CD14-positive monocyte (primary cell): ENCODE measurements at regions of chr20 and their contacts with region 1.

Region 1: DNA sequence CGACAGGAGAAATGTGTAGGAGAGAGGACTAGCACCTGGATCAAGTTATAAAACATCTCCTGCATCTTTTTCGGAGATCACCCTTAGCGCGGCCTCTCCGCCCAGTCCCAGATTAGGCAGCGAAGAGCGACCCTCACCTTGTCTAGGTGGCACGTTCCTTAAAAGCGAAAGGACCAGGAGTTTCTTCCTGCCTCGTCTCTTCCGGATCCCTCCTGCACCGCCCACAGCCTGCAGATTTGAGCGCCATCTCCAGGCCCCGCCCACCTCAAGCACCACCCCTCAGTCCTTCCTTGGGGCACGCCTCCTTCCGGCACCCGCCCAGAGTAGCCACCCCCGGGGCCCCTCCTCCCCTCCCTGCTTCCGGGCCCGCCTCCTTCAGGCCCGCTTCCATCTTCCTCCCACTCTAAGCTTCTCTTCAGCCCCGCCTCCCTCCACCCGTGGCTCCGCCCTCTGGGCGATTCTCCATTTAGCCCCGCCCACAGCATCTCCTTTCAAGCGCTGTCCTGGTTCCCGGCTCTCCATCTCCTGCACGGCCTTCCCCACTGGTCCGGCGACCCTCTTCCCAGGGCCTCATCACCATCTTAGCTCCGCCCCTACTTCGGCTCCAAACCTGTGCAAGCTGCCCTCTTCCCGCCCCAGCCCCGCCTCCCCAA is 662 bp upstream of the RALY start:
- DNase-seq: peak; percentile 96 to 98 (median 98)
- H3K4me3 ChIP-seq: peak overlapping the region; percentile 72 to 99 (median 98)
- H3K4me3 Mint-ChIP-seq: peak overlapping the region; percentile 92 to 99
- H3K27ac ChIP-seq: peak overlapping the region; percentile 82 to 94
- H3K27ac Mint-ChIP-seq: peak overlapping the region; percentile 94 to 99 (median 98)
- H3K4me1 ChIP-seq: peaks cover 34 to 51% of the 10 kb centered on the region in 2 donors
- H3K4me1 Mint-ChIP-seq: peaks cover 52% of the 10 kb centered on the region
- H3K27me3 ChIP-seq: no peaks in the 10 kb centered on the region
- H3K27me3 Mint-ChIP-seq: peaks cover 0 to 7% (median 1%) of the 10 kb centered on the region in 3 donors
- CTCF ChIP-seq: no peak

Region 2: DNA sequence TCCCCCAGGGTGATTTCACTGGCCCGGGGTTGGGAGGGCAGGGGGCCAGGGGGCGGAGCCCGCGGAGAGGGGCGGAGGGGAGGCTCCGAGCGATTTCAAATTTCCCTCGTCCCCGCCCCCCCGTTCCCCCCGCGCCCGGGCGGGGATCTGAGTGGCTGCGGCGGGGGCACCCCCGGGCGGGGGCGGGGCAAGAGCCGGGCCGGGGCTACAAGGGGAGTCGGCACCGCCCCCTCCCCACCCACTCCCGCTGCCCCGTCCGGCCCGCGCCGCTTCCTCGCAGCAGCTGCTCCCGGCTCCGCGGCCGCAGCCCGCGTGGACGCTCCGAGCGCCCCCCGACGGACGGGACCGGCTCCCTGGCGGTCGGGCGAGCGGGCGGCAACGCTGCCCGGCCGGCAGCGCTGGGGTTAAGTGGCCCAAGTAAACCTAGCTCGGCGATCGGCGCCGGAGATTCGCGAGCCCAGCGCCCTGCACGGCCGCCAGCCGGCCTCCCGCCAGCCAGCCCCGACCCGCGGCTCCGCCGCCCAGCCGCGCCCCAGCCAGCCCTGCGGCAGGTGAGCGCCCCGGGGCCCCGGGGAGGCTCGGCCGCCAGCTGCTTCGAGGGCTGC is 1230.8 kb before region 1 on chr20 and contains the start of gene DNMT3B:
- intact Hi-C with region 1: no loop called
- DNase-seq: peak; percentile 40 to 48 (median 46)
- H3K4me3 ChIP-seq: peak within 1 kb of the TSS; percentile 62 to 89 (median 66)
- H3K4me3 Mint-ChIP-seq: peak within 1 kb of the TSS; percentile 92 to 98
- H3K27ac ChIP-seq: no peak within 1 kb of the TSS
- H3K27ac Mint-ChIP-seq: peak within 1 kb of the TSS in 3 of 7 donors; percentile 38 to 84 (median 53)
- H3K4me1 ChIP-seq: peaks cover 25 to 26% of the 10 kb centered on the region in 2 donors
- H3K4me1 Mint-ChIP-seq: peaks cover 27% of the 10 kb centered on the region
- H3K27me3 ChIP-seq: peaks cover 0 to 18% of the 10 kb centered on the region in 2 donors
- H3K27me3 Mint-ChIP-seq: peaks cover 19 to 25% (median 21%) of the 10 kb centered on the region in 3 donors
- CTCF ChIP-seq: no peak
- polyA plus RNA-seq, gene DNMT3B: 0.39 to 0.44 TPM in 2 of 3 donors, not detected in the other

Region 3: DNA sequence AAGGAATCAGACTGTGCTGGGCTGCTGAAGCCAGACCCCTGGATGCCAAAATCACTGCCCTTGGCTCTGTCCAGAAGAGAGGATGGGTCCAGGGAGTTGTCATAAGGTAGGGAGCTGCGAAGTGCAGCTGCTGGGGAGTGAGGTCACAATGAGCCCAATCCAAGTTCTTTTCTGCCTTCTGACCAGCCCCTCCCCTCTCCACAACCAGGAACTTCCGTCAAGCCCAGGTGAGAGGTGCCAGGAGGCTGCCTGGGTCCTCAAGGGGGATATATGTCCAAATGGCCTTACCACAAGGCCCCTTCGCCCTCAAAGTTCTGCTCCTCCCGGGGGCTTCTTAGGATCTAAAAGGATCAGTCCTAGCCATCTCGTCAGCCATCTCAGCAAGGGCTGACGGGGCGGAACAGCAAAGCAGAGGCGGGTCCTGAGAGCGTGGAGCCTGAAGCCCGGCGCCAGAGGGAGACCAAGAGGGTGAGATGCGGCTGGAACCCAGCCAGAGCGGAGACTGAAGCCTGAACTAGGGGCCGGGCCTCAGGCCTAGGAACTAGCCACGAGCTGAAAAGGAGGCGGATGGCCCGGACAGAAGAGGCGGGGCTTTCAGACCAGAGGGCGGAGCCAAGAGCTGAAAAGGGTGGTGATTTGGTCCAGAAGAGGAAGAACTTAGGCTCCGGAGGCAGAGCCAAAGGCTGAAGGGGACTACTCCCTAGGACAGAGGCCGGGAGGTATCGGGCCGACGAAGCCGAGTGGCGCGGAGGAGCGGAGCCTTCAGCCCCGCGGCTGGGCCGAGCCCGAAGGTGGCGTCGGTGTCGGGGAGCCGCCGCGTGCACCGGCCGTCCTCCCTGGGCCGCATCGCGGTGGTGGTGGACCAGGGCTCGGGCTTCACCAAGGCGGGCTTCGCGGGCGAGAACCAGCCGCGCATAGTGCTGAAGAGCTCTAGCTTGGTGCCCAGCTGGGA is 326.5 kb before region 1 on chr20 and contains the start of gene ACTL10:
- intact Hi-C with region 1: loop called (anchors 5 to 10 kb)
- DNase-seq: peak; percentile 95 to 98 (median 98)
- H3K4me3 ChIP-seq: peak within 1 kb of the TSS; percentile 44 to 85 (median 51)
- H3K4me3 Mint-ChIP-seq: peak within 1 kb of the TSS; percentile 79 to 80
- H3K27ac ChIP-seq: peak within 1 kb of the TSS; percentile 78 to 82
- H3K27ac Mint-ChIP-seq: peak within 1 kb of the TSS; percentile 74 to 92 (median 88)
- H3K4me1 ChIP-seq: peaks cover 37 to 54% of the 10 kb centered on the region in 2 donors
- H3K4me1 Mint-ChIP-seq: peaks cover 38% of the 10 kb centered on the region
- H3K27me3 ChIP-seq: no peaks in the 10 kb centered on the region
- H3K27me3 Mint-ChIP-seq: peaks cover 2 to 3% (median 2%) of the 10 kb centered on the region in 3 donors
- CTCF ChIP-seq: peak; percentile 20
- polyA plus RNA-seq, gene ACTL10: 0.31 to 1.2 (median 1.1) TPM

Region 4: DNA sequence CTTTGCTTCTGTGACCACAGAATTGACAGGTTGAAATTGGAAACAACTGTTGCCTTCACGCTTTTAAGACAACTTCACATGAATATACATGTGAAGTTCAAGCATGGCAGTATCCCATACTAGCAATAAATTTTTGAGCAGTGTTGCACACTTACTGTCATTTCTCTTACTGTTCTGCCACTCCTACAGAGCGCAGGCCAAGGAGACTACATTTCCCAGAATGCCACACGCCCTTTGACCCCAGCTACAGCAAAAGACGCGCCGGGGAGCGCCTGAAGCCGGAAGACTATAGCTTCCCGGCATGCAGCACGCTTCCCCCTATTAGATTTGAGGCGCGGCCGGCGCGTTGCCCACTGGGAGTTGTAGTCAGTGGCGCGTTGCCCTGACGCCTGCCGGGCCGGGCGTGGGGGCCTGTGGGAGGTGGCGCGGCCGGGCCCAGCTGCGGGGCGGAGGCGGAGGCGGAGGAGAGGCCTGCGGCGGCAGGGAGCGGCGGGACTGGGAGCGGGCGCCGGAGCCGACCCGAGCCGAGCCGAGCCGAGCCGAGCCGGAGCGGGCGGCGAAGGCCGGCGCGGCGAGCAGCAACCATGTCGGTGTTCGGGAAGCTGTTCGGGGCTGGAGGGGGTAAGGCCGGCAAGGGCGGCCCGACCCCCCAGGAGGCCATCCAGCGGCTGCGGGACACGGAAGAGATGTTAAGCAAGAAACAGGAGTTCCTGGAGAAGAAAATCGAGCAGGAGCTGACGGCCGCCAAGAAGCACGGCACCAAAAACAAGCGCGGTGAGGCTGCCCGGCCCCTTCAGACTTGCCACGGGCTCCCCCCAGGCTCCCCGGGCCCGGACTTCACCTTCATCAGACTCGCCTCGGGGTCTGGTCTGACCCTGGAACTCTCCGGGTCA is 181.9 kb before region 1 on chr20 and contains the start of gene CHMP4B:
- intact Hi-C with region 1: loop called in 1 of 2 experiments (anchors 2 kb)
- DNase-seq: peak; percentile 98 to 99 (median 98)
- H3K4me3 ChIP-seq: peak within 1 kb of the TSS; percentile 82 to 90 (median 90)
- H3K4me3 Mint-ChIP-seq: peak within 1 kb of the TSS; percentile 96 to 98
- H3K27ac ChIP-seq: peak within 1 kb of the TSS; percentile 100
- H3K27ac Mint-ChIP-seq: peak within 1 kb of the TSS; percentile 100
- H3K4me1 ChIP-seq: peaks cover 52 to 60% of the 10 kb centered on the region in 2 donors
- H3K4me1 Mint-ChIP-seq: peaks cover 57% of the 10 kb centered on the region
- H3K27me3 ChIP-seq: no peaks in the 10 kb centered on the region
- H3K27me3 Mint-ChIP-seq: peaks cover 0 to 2% (median 0%) of the 10 kb centered on the region in 3 donors
- CTCF ChIP-seq: no peak
- polyA plus RNA-seq, gene CHMP4B: 7.1 to 181 (median 10.0) TPM

Region 5: DNA sequence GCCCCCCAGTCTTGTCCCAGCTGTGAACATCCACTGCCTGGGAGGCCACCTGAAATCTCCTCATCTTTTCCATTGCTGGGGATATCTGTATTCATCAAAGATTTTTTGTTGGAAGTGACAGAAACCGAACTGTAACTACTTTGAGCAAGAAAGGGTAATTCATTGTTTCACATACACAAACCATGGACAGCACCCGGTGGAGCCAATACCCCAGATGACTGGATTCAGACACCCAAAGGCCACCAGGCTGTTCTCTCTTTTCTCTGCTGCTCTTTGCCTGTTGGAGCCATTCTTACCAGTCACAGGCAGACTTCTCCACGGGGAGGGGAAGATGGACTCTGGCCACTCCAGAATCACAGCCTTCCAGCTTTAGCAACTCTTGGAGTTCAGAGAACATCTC is 11.1 kb before region 1 on chr20:
- intact Hi-C with region 1: no loop called
- DNase-seq: no peak
- H3K4me3 ChIP-seq: no peak overlapping the region
- H3K4me3 Mint-ChIP-seq: no peak overlapping the region
- H3K27ac ChIP-seq: no peak overlapping the region
- H3K27ac Mint-ChIP-seq: no peak overlapping the region
- H3K4me1 ChIP-seq: no peaks in the 10 kb centered on the region
- H3K4me1 Mint-ChIP-seq: no peaks in the 10 kb centered on the region
- H3K27me3 ChIP-seq: no peaks in the 10 kb centered on the region
- H3K27me3 Mint-ChIP-seq: peaks cover 0 to 2% (median 2%) of the 10 kb centered on the region in 3 donors
- CTCF ChIP-seq: no peak

Region 6: GRCh38 chr20:34302723-34303528 is 309.9 kb after region 1 on chr20 and contains the start of gene AHCY:
- intact Hi-C with region 1: loop called in 1 of 2 experiments (anchors 5 kb)
- DNase-seq: peak; percentile 92 to 94 (median 93)
- H3K4me3 ChIP-seq: peak within 1 kb of the TSS; percentile 67 to 89 (median 72)
- H3K4me3 Mint-ChIP-seq: peak within 1 kb of the TSS; percentile 82 to 91
- H3K27ac ChIP-seq: peak within 1 kb of the TSS; percentile 45 to 92
- H3K27ac Mint-ChIP-seq: peak within 1 kb of the TSS; percentile 90 to 95 (median 92)
- H3K4me1 ChIP-seq: peaks cover 48 to 51% of the 10 kb centered on the region in 2 donors
- H3K4me1 Mint-ChIP-seq: peaks cover 32% of the 10 kb centered on the region
- H3K27me3 ChIP-seq: no peaks in the 10 kb centered on the region
- H3K27me3 Mint-ChIP-seq: peaks cover 0 to 2% (median 0%) of the 10 kb centered on the region in 3 donors
- CTCF ChIP-seq: peak; percentile 6
- polyA plus RNA-seq, gene AHCY: 35.7 to 42.7 (median 41.1) TPM